AG04450 (cell line): ENCODE measurements at regions of chr6 and their contacts with region 1.

Region 1: DNA sequence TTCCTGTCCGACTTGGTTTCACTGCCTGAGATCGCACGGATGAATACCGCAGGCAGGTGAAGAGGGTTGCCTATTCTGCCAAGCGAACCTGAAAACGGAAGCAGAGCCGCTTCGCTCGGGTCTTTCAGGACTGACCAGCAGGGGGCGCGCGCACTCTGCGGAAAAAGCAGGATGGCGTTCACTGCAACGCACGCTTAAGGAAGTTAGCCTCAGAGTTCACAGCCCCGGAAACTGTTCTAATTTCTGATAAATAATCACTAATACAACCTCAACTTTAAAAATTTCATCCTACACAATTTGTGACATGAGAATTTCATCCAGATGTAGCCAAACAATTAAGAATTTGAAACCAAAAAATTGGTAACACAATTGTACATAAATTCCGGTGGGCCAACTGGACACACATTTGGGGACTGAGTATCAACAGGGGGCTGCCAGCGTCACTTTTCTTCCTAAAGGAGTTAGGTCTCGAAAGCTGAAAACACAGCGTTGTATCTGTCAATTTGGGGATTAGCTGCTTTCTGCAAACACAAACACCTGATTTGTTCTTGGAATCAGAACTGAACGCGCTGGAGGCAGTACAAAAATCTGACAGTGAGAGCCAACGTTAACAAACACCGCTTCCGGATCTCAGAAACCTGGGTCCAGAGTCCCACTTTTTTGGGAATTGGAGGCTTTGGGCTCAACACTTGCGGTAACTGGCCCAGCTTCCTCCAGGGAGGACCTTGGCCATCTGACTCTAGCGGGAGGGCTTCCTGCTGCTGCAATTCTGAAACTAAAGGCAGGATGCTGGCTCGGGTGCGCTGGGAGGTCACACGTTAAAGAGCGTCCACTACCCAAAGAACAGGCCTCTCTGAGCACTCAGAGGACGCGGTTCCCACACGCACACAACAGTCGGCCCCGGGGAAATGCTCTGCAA is 8.8 kb downstream of the PXDC1 start:
- DNase-seq: no peak
- H3K4me3 ChIP-seq: no peak overlapping the region; the same call in 1 of the 2 replicates
- H3K27ac ChIP-seq: no peak overlapping the region
- H3K27me3 ChIP-seq: no peaks in the 10 kb centered on the region
- CTCF ChIP-seq: peak; percentile 92

Region 2: GRCh38 chr6:3013479-3013878 is 729.2 kb before region 1 on chr6:
- CTCF ChIA-PET with region 1: no interaction called
- POLR2A ChIA-PET with region 1: no interaction called
- DNase-seq: no peak
- H3K4me3 ChIP-seq: no peak overlapping the region
- H3K27ac ChIP-seq: no peak overlapping the region
- H3K27me3 ChIP-seq: no peaks in the 10 kb centered on the region
- CTCF ChIP-seq: no peak

Region 3: DNA sequence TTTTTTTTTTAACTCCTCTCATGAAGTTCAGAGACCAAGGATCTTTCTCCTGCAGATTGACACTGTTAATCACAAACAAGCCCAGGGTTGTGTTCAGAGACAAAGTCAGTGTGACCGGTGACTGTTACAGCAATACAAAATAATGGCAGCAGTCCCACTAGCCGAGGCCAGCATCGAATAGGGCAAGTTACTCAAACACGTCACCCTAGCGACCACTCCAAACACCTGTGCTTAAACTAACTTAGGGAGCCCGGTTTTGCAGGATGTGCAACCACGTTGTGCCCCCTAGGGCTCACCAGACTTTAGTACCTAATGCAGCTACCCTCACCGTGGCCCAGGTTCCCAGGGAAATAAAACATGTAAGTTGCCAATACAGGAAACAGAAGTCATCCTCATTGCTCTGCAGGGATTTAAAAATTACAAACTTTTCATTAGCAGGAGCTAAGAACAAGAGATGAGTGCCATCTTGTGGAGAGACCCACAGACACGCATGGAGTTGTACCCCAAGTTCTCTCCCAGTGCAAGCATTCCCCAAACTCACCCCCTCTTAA is 144.5 kb after region 1 on chr6:
- CTCF ChIA-PET with region 1: interaction called, 34 read pairs
- POLR2A ChIA-PET with region 1: no interaction called
- DNase-seq: no peak
- H3K4me3 ChIP-seq: no peak overlapping the region
- H3K27ac ChIP-seq: no peak overlapping the region
- H3K27me3 ChIP-seq: no peaks in the 10 kb centered on the region
- CTCF ChIP-seq: peak; percentile 65

Region 4: GRCh38 chr6:3929281-3929798 is 186.7 kb after region 1 on chr6:
- CTCF ChIA-PET with region 1: interaction called, 17 read pairs
- POLR2A ChIA-PET with region 1: no interaction called
- DNase-seq: no peak
- H3K4me3 ChIP-seq: no peak overlapping the region
- H3K27ac ChIP-seq: peak overlapping the region; percentile 31
- H3K27me3 ChIP-seq: no peaks in the 10 kb centered on the region
- CTCF ChIP-seq: no peak